ENCODE measurements at regions of chr6 and their contacts with region 1.

Region 1: GRCh38 chr6:81752138-81752920 is at the start of gene TENT5A:
- DNase-seq: peak; percentile 88
- ATAC-seq: peak; percentile 77
- H3K4me3 ChIP-seq: peak within 1 kb of the TSS; percentile 92
- H3K27ac ChIP-seq: peak within 1 kb of the TSS; percentile 94
- H3K4me1 ChIP-seq: peaks cover 7% of the 10 kb centered on the region
- H3K27me3 ChIP-seq: no peaks in the 10 kb centered on the region
- CTCF ChIP-seq: no peak; the same call in 1 of the 2 replicates
- POLR2A ChIP-seq: no peak; the same call in 1 of the 2 replicates
- RAD21 ChIP-seq: no peak; the same call in 1 of the 2 replicates
- total RNA-seq, gene TENT5A: 10.8 and 16.9 TPM in 2 replicates

Region 2: GRCh38 chr6:80338201-80338836 is 1414.0 kb before region 1 on chr6:
- CTCF ChIA-PET with region 1: no interaction called
- POLR2A ChIA-PET with region 1: no interaction called
- dilution Hi-C with region 1: no loop called
- in situ Hi-C with region 1: no loop called
- intact Hi-C with region 1: loop called (anchors 5 kb)
- DNase-seq: peak; percentile 54
- ATAC-seq: peak; percentile 50; the same call in 1 of the 2 replicates
- H3K4me3 ChIP-seq: no peak overlapping the region
- H3K27ac ChIP-seq: no peak overlapping the region
- H3K4me1 ChIP-seq: no peaks in the 10 kb centered on the region
- H3K27me3 ChIP-seq: no peaks in the 10 kb centered on the region
- CTCF ChIP-seq: peak; percentile 57
- POLR2A ChIP-seq: no peak
- RAD21 ChIP-seq: peak; percentile 63

Region 3: GRCh38 chr6:80742481-80742880 is 1009.8 kb before region 1 on chr6:
- CTCF ChIA-PET with region 1: no interaction called
- POLR2A ChIA-PET with region 1: no interaction called
- dilution Hi-C with region 1: no loop called
- in situ Hi-C with region 1: no loop called
- intact Hi-C with region 1: loop called (anchors 5 kb)
- DNase-seq: peak; percentile 25
- ATAC-seq: peak; percentile 24; the same call in 1 of the 2 replicates
- H3K4me3 ChIP-seq: no peak overlapping the region
- H3K27ac ChIP-seq: no peak overlapping the region
- H3K4me1 ChIP-seq: no peaks in the 10 kb centered on the region
- H3K27me3 ChIP-seq: no peaks in the 10 kb centered on the region
- CTCF ChIP-seq: peak; percentile 41
- POLR2A ChIP-seq: no peak
- RAD21 ChIP-seq: peak; percentile 49

Region 4: GRCh38 chr6:81465859-81466258 is 286.5 kb before region 1 on chr6:
- CTCF ChIA-PET with region 1: no interaction called
- POLR2A ChIA-PET with region 1: no interaction called
- dilution Hi-C with region 1: no loop called
- in situ Hi-C with region 1: no loop called
- intact Hi-C with region 1: loop called (anchors 5 kb)
- DNase-seq: peak; percentile 24
- ATAC-seq: no peak
- H3K4me3 ChIP-seq: no peak overlapping the region
- H3K27ac ChIP-seq: no peak overlapping the region
- H3K4me1 ChIP-seq: no peaks in the 10 kb centered on the region
- H3K27me3 ChIP-seq: no peaks in the 10 kb centered on the region
- CTCF ChIP-seq: peak; percentile 55
- POLR2A ChIP-seq: no peak
- RAD21 ChIP-seq: peak; percentile 56

Region 5: GRCh38 chr6:81818901-81819361 is 66.6 kb after region 1 on chr6:
- CTCF ChIA-PET with region 1: no interaction called
- POLR2A ChIA-PET with region 1: no interaction called
- dilution Hi-C with region 1: no loop called
- in situ Hi-C with region 1: no loop called
- intact Hi-C with region 1: no loop called
- DNase-seq: no peak
- ATAC-seq: peak; percentile 59
- H3K4me3 ChIP-seq: no peak overlapping the region
- H3K27ac ChIP-seq: no peak overlapping the region
- H3K4me1 ChIP-seq: peaks cover 4% of the 10 kb centered on the region
- H3K27me3 ChIP-seq: no peaks in the 10 kb centered on the region
- CTCF ChIP-seq: no peak
- POLR2A ChIP-seq: no peak
- RAD21 ChIP-seq: no peak

Region 6: GRCh38 chr6:81977486-81977885 is 225.2 kb after region 1 on chr6:
- CTCF ChIA-PET with region 1: no interaction called
- POLR2A ChIA-PET with region 1: no interaction called
- dilution Hi-C with region 1: no loop called
- in situ Hi-C with region 1: no loop called
- intact Hi-C with region 1: loop called (anchors 1 kb)
- DNase-seq: peak; percentile 59
- ATAC-seq: peak; percentile 86
- H3K4me3 ChIP-seq: no peak overlapping the region
- H3K27ac ChIP-seq: no peak overlapping the region
- H3K4me1 ChIP-seq: no peaks in the 10 kb centered on the region; the same call in 1 of the 2 replicates
- H3K27me3 ChIP-seq: no peaks in the 10 kb centered on the region
- CTCF ChIP-seq: no peak
- POLR2A ChIP-seq: no peak
- RAD21 ChIP-seq: no peak

Region 7: GRCh38 chr6:82178077-82178758 is 425.9 kb after region 1 on chr6:
- CTCF ChIA-PET with region 1: no interaction called
- POLR2A ChIA-PET with region 1: no interaction called
- dilution Hi-C with region 1: no loop called
- in situ Hi-C with region 1: no loop called
- intact Hi-C with region 1: loop called (anchors 2 kb)
- DNase-seq: peak; percentile 55
- ATAC-seq: peak; percentile 72
- H3K4me3 ChIP-seq: no peak overlapping the region
- H3K27ac ChIP-seq: no peak overlapping the region
- H3K4me1 ChIP-seq: no peaks in the 10 kb centered on the region
- H3K27me3 ChIP-seq: no peaks in the 10 kb centered on the region
- CTCF ChIP-seq: peak; percentile 64
- POLR2A ChIP-seq: no peak
- RAD21 ChIP-seq: peak; percentile 81